IMR-90 (cell line): ENCODE measurements at regions of chr9 and their contacts with region 1.

Region 1: GRCh38 chr9:27701587-27701986 is 128.3 kb upstream of the C9orf72 start:
- DNase-seq: no peak
- ATAC-seq: no peak
- H3K4me3 ChIP-seq: no peak overlapping the region
- H3K27ac ChIP-seq: no peak overlapping the region
- H3K4me1 ChIP-seq: no peaks in the 10 kb centered on the region
- H3K27me3 ChIP-seq: no peaks in the 10 kb centered on the region
- CTCF ChIP-seq: no peak
- POLR2A ChIP-seq: no peak
- RAD21 ChIP-seq: no peak

Region 2: GRCh38 chr9:27679338-27679737 is 22.2 kb before region 1 on chr9:
- CTCF ChIA-PET with region 1: no interaction called
- POLR2A ChIA-PET with region 1: interaction called, 13 read pairs
- dilution Hi-C with region 1: no loop called
- in situ Hi-C with region 1: no loop called
- intact Hi-C with region 1: no loop called
- DNase-seq: no peak
- ATAC-seq: no peak
- H3K4me3 ChIP-seq: no peak overlapping the region
- H3K27ac ChIP-seq: no peak overlapping the region
- H3K4me1 ChIP-seq: no peaks in the 10 kb centered on the region
- H3K27me3 ChIP-seq: no peaks in the 10 kb centered on the region
- CTCF ChIP-seq: no peak
- POLR2A ChIP-seq: no peak
- RAD21 ChIP-seq: no peak